K562 (cell line): ENCODE measurements at regions of chr22 and their contacts with region 1.

Region 1: GRCh38 chr22:18001040-18001893 is 23.1 kb downstream of the MICAL3 start:
- DNase-seq: peak; percentile 98 to 100 (median 100)
- ATAC-seq: peak; percentile 95
- H3K4me3 ChIP-seq: peak overlapping the region; percentile 95
- H3K27ac ChIP-seq: peak overlapping the region; percentile 100
- H3K4me1 ChIP-seq: peaks cover 12 to 24% of the 10 kb centered on the region in 2 experiments; a peak in 4 of 5 replicates
- H3K27me3 ChIP-seq: no peaks in the 10 kb centered on the region
- CTCF ChIP-seq: peak; percentile 55 to 74 (median 62)
- EP300 ChIP-seq: peak; percentile 4; the same call in 1 of the 2 replicates
- POLR2A ChIP-seq: peak; percentile 88
- RAD21 ChIP-seq: peak; percentile 58 to 61

Region 2: DNA sequence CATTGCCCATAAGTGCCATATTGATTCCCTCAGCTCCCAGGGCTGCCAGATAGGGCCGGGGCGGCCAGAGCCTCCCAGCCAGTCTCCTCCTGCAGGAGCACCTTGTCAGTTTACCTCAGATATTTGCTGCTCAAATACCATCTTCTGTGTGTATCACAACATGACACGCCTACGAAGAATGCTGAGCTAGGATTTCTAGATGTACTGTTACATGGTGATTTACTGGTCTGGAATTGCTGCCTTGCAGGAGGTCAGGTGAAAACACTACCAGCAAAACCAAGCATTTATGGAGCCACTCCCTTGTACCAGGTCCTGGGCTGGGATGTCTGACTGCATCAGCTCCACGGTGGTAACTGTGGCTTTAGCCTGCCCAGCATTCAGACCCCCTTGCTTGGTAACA is 11.3 kb after region 1 on chr22:
- CTCF ChIA-PET with region 1: no interaction called
- POLR2A ChIA-PET with region 1: interaction called, 12 read pairs
- in situ Hi-C with region 1: no loop called
- intact Hi-C with region 1: no loop called
- DNase-seq: no peak
- ATAC-seq: peak; percentile 40
- H3K4me3 ChIP-seq: no peak overlapping the region
- H3K27ac ChIP-seq: no peak overlapping the region
- H3K4me1 ChIP-seq: no peaks in the 10 kb centered on the region
- H3K27me3 ChIP-seq: peaks cover 9 to 15% of the 10 kb centered on the region in 2 experiments
- CTCF ChIP-seq: no peak
- EP300 ChIP-seq: no peak
- POLR2A ChIP-seq: no peak
- RAD21 ChIP-seq: no peak

Region 3: DNA sequence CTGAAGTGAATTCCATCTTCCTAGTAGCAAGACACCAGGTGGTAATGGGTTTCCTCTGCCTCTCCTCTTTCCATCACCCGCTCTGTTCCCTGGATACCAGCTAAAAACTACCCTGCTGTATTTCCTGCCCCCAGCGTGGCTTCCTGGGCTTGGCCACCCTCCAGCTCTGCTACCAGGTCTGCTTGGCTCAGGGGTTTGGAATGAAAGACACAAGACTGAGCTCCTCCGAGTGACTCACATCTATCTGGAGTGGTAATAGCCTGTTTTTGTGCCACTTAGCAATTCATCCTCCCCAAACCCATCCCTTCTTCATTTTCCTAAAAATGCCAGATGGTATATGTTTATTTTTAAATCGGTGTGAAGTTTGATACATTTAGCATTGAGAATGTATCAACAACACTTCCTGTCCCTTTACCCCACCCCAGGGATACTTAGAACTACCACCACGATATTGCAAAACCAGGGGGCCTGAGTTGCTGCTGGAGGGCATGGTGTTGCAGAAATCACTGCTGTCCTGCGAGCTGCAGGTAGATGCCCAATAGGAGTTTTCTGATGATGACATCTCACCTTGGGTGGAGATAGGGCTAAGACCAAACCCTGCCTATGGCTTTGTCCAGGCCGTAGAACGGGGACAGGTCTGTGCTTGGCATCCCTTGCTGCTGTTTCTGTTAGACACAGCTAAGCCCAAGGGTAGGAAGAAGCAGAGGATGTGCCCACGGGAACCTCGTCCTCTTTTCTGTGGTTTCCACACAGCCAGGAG is 30.6 kb after region 1 on chr22:
- CTCF ChIA-PET with region 1: no interaction called
- POLR2A ChIA-PET with region 1: no interaction called
- in situ Hi-C with region 1: no loop called
- intact Hi-C with region 1: no loop called
- DNase-seq: no peak
- ATAC-seq: no peak
- H3K4me3 ChIP-seq: no peak overlapping the region
- H3K27ac ChIP-seq: no peak overlapping the region
- H3K4me1 ChIP-seq: no peaks in the 10 kb centered on the region; a peak in 1 of 5 replicates
- H3K27me3 ChIP-seq: peaks cover 42 to 53% of the 10 kb centered on the region in 2 experiments; a peak in 4 of 5 replicates
- CTCF ChIP-seq: no peak
- EP300 ChIP-seq: no peak
- POLR2A ChIP-seq: no peak
- RAD21 ChIP-seq: no peak